ENCODE measurements at regions of chr2 and their contacts with region 1.

Region 1: GRCh38 chr2:11688222-11689069 is 18.5 kb upstream of the NTSR2 start:
- DNase-seq: peak; percentile 79 to 93
- ATAC-seq: peak; percentile 77 to 94
- H3K4me3 ChIP-seq: peak overlapping the region; percentile 13; the same call in 2 of the 3 replicates
- H3K27ac ChIP-seq: peak overlapping the region; percentile 15 to 55; a peak in 4 of 6 replicates
- H3K4me1 ChIP-seq: peaks cover 9% of the 10 kb centered on the region; the same call in 1 of the 3 replicates
- CTCF ChIP-seq: peak; percentile 96
- EP300 ChIP-seq: 0 out of 5 replicates have a peak, but pooled peaks of 1 of the 2 experiments have one; percentile 11
- POLR2A ChIP-seq: no peak
- RAD21 ChIP-seq: peak; percentile 79 to 90

Region 2: DNA sequence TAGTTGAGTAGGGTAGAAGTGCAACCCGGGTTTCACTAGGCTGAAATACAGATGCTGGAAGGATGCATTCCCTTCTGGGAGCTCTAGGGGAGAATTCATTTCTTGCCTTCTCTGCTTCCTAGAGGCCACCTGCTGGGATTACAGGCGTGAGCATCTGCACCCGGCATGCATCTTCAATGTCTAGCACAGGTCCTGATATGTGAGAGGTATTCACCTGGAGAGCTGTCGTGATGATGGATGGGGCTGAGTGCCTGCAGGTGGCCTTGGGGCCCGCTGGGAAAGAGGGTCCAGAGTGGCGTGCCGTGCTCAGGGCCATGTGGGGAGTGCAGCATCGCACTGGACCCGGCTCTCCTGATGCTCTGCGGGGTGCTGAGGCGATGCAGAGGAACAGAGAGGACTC is 11.8 kb before region 1 on chr2:
- CTCF ChIA-PET with region 1: interaction called, 34 read pairs
- POLR2A ChIA-PET with region 1: no interaction called
- DNase-seq: peak; percentile 25 to 32
- ATAC-seq: peak; percentile 72 to 78
- H3K4me3 ChIP-seq: no peak overlapping the region
- H3K27ac ChIP-seq: no peak overlapping the region
- H3K4me1 ChIP-seq: peaks cover 7% of the 10 kb centered on the region; the same call in 2 of the 3 replicates
- CTCF ChIP-seq: no peak
- EP300 ChIP-seq: no peak
- POLR2A ChIP-seq: no peak
- RAD21 ChIP-seq: no peak

Region 3: DNA sequence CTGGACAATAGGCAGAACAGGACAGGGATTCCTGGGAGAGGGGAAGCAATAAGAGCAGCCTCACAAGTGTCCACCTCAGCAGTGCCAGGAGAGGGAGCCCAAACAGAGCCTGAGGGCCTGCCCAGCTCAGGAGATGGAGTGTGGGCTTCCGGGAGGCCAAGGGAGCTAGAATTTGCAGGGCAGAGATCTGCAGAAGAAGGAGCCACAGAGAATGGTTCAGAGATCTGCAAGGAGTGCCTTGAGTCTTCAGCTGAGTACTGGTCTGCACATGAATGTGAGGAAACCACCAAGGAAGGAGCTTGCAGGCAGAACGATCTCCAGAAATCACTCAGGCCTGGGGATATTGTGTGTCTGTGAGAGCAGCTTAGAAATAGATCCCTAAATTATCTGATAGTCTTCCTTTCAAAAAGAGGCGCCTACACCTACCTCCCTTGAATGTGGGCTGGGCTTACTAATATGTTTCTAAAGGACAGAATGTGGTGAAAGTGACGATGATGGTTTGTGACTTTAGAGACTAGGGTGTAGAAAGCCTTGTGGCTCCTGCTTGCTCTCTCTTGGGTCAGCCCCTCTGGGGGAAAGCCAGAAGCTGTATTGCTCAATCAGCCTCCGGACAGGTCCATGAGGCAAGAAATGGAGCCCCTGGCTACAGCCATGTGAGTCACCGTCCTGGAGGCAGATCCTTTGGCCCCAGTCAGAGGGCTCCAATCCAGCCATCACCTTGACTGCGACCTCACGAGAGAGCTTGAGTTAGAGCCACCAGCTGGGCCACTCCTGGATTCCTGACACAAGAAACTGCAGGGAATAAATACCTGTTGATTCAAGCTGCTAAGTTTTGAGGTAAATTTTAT is 50.4 kb after region 1 on chr2:
- CTCF ChIA-PET with region 1: interaction called, 83 read pairs
- POLR2A ChIA-PET with region 1: interaction called, 4 read pairs
- DNase-seq: peak; percentile 40 to 67
- ATAC-seq: peak; percentile 91 to 95
- H3K4me3 ChIP-seq: no peak overlapping the region
- H3K27ac ChIP-seq: peak overlapping the region; percentile 4 to 66; a peak in 4 of 6 replicates
- H3K4me1 ChIP-seq: peaks cover 27% of the 10 kb centered on the region
- CTCF ChIP-seq: peak; percentile 49
- EP300 ChIP-seq: no peak
- POLR2A ChIP-seq: no peak
- RAD21 ChIP-seq: peak; percentile 54 to 72

Region 4: GRCh38 chr2:11753886-11754699 is 65.6 kb after region 1 on chr2:
- CTCF ChIA-PET with region 1: interaction called, 83 read pairs
- POLR2A ChIA-PET with region 1: no interaction called
- DNase-seq: peak; percentile 31 to 37
- ATAC-seq: peak; percentile 69 to 81
- H3K4me3 ChIP-seq: no peak overlapping the region
- H3K27ac ChIP-seq: peak overlapping the region in 1 of 2 experiments; percentile 11; a peak in 3 of 6 replicates
- H3K4me1 ChIP-seq: peaks cover 21% of the 10 kb centered on the region
- CTCF ChIP-seq: no peak
- EP300 ChIP-seq: no peak
- POLR2A ChIP-seq: no peak
- RAD21 ChIP-seq: no peak

Region 5: DNA sequence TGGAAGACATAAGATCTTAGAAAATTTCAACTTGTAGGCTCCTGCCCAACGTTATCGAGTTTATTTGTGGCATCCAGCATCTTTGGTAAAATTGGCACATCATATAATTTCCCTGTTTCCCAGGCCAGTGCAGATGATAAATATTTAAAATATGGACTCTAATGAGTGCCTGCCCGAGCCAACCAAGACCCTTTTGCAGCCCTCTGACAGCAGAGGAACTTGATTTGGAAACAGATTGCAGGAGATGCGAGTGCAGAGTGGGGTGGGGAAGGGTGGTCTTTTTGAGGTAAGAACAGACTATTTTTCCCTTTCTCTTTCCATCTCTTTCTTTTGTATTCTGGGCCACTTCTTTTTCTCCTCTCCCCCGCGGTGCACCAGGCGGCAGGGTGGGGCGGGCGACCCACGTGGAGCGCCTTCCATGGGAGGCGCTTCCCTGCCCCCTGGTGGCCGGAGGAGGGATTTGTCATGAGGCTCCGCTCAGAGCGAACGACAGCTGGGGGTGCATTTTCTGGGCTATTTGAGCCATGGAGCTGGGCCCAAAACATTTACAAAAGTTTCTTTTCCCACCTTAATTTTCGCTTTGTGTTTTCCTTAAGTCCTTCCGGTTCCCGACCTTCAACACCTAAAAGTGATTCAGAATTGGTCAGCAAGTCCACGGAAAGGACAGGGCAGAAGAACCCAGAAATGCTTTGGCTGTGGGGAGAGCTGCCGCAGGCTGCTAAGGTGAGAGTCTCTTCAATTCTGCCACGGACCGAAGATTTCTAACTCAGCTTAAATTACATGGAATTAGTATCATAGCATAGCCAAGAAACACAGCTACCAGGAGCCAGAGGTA is 90.7 kb after region 1 on chr2:
- CTCF ChIA-PET with region 1: interaction called, 700 read pairs
- POLR2A ChIA-PET with region 1: interaction called, 4 read pairs
- DNase-seq: peak; percentile 66 to 92
- ATAC-seq: peak; percentile 93 to 99
- H3K4me3 ChIP-seq: no peak overlapping the region
- H3K27ac ChIP-seq: peak overlapping the region; percentile 18 to 63; a peak in 4 of 6 replicates
- H3K4me1 ChIP-seq: 0 out of 3 replicates have a peak, but pooled peaks cover 3% of the 10 kb centered on the region
- CTCF ChIP-seq: peak; percentile 99
- EP300 ChIP-seq: no peak
- POLR2A ChIP-seq: no peak
- RAD21 ChIP-seq: peak; percentile 97 to 98

Measured in A549 (cell line).